MCF 10A (cell line): ENCODE measurements at regions of chr12 and their contacts with region 1.

Region 1: DNA sequence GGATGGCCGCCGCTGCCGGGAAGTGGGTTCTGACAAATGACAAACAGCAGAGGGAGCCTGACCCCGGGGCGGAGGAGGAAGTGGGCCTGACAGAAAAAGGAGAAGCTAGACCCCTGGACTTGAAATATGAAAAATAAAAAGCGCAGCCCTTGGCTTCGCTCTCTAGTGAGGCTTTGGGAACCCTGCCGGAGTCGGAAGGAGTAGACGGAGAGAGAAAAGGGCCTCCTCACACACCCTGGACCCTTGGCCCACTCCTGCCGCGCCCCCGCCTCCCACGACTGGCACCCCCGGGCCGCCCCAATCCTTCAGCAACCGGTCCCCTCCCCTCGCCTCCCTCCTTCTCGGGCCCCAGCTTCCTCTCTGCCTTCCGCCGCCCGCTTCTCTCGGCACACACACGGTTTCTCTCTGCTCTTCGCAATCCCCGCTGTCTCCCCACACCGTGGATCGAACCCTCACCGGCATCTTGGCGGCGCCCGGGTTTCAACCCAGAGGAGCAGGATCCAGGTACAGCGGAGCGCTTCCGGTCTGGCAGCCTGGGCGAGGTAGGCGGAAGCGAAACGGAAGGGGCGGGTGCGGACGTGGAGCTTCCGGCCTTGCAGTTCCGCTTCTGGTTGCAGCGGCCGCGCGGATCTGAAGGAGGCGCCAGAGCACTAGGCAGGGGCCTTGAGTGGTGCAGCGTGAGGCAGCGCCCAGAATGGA is at the start of gene ARPC3:
- DNase-seq: peak; percentile 93
- H3K4me3 Mint-ChIP-seq: peak within 1 kb of the TSS; percentile 99
- H3K27ac Mint-ChIP-seq: peak within 1 kb of the TSS; percentile 100
- H3K4me1 Mint-ChIP-seq: peaks cover 5% of the 10 kb centered on the region
- H3K27me3 Mint-ChIP-seq: no peaks in the 10 kb centered on the region
- CTCF ChIP-seq: peak; percentile 83
- total RNA-seq, gene ARPC3: 230 and 245 TPM in 2 replicates

Region 2: DNA sequence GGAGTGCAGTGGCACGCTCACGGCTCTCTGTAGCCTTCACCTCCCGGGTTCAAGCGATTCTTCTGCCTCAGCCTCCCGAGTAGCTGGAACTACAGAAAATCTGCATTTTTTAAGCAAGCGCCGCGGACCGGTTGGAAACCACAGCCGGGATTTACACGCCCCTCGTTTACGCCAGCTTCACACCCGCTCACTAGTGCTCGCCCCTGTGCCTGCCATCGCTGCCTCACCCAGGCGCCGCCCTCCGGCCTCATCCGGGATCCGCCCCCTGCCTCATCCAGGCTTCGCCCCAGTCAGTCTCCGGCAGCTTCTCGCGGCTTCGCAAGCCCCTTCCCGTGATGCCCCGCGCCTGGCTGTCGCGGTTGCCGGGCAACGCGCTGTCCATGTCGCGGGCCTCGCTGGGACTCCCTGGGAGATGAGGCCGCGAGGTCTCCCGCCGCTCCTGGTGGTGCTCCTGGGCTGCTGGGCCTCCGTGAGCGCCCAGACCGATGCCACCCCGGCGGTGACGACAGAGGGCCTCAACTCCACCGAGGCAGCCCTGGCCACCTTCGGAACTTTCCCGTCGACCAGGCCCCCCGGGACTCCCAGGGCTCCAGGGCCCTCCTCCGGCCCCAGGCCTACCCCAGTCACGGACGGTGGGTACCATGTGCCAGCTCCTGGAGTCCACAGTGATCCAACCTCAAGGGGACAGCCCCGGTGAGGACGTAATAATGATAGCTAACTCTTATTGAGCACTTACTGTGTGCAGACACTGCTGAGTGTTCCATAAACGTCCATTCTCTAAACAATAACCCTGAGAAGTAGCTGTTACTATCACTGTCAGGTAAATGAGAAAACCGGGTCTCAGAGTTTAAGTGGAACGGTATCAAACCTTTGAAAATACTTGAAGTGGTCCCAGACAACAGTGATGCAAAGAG is 164.1 kb after region 1 on chr12 and contains the start of gene TCTN1:
- CTCF ChIA-PET with region 1: interaction called, 4 read pairs
- POLR2A ChIA-PET with region 1: interaction called, 11 read pairs
- intact Hi-C with region 1: no loop called
- DNase-seq: peak; percentile 92
- H3K4me3 Mint-ChIP-seq: peak within 1 kb of the TSS; percentile 78
- H3K27ac Mint-ChIP-seq: peak within 1 kb of the TSS; percentile 66
- H3K4me1 Mint-ChIP-seq: no peaks in the 10 kb centered on the region
- H3K27me3 Mint-ChIP-seq: no peaks in the 10 kb centered on the region
- CTCF ChIP-seq: no peak
- total RNA-seq, gene TCTN1: 36.5 and 38.9 TPM in 2 replicates

Region 3: DNA sequence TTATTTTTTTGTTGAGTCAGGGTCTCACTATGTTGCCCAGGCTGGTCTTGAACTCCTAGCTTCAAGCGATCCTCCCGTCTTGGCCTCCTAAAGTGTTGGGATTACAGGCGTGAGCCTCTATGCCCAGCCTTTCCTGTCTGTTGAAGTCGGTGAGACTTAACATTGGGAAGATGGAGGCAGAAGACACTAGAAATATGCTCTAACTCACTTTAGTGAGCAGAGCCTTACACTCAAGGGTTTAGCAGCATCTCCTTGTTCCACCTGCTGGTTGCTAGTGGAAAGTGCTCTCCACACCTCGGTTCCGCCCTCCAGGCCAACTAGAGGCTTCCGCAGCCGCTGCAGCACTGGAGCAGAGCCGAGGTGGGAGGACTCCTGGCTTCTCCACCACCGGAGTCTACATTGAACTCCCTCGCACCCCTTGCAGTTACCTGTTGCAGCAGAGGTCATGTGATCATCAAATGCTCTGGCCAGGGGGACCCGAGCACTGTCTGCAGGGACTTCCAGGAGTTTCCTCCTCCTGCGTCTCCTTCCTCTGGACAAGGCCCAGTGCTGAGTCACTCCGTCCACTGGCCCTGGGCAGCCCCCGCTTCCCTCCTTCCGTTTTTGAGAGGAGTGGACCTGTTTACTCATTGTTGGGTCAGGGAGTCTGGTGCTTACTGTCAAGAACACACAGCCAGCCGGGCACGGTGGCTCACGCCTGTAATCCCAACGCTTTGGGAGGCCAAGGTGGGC is 248.4 kb after region 1 on chr12:
- CTCF ChIA-PET with region 1: interaction called, 4 read pairs
- POLR2A ChIA-PET with region 1: no interaction called
- intact Hi-C with region 1: loop called (anchors 10 kb)
- DNase-seq: peak; percentile 91
- H3K4me3 Mint-ChIP-seq: no peak overlapping the region
- H3K27ac Mint-ChIP-seq: no peak overlapping the region
- H3K4me1 Mint-ChIP-seq: no peaks in the 10 kb centered on the region
- H3K27me3 Mint-ChIP-seq: no peaks in the 10 kb centered on the region
- CTCF ChIP-seq: peak; percentile 55